Activated T-helper 2 cell treated with anti-CD3 and anti-CD28 coated beads, Interferon-gamma antibody, Interleukin-2, Interleukin-4, amounts not matched to agents 10 μg/mL and 5 μg/mL and 100 μg/mL, durations not matched to agents 14 hours and 24 hours and 36 hours (primary cell): ENCODE measurements at regions of chr17 and their contacts with region 1.

Region 1: GRCh38 chr17:79839363-79840268 is at the start of gene CBX4:
- DNase-seq: peak; percentile 82
- H3K4me3 Mint-ChIP-seq: peak within 1 kb of the TSS; percentile 88
- H3K27ac Mint-ChIP-seq: peak within 1 kb of the TSS; percentile 81
- H3K4me1 Mint-ChIP-seq: peaks cover 14% of the 10 kb centered on the region
- H3K27me3 Mint-ChIP-seq: peaks cover 20% of the 10 kb centered on the region
- total RNA-seq, gene CBX4: 18.5 and 25.0 TPM in 2 replicates

Region 2: GRCh38 chr17:79581324-79581932 is 258.2 kb before region 1 on chr17:
- intact Hi-C with region 1: no loop called
- DNase-seq: no peak
- H3K4me3 Mint-ChIP-seq: no peak overlapping the region
- H3K27ac Mint-ChIP-seq: no peak overlapping the region
- H3K4me1 Mint-ChIP-seq: no peaks in the 10 kb centered on the region
- H3K27me3 Mint-ChIP-seq: no peaks in the 10 kb centered on the region

Region 3: GRCh38 chr17:79749156-79749815 is 90.3 kb before region 1 on chr17:
- intact Hi-C with region 1: loop called (anchors 5 kb)
- DNase-seq: no peak
- H3K4me3 Mint-ChIP-seq: no peak overlapping the region
- H3K27ac Mint-ChIP-seq: no peak overlapping the region
- H3K4me1 Mint-ChIP-seq: peaks cover 16% of the 10 kb centered on the region
- H3K27me3 Mint-ChIP-seq: peaks cover 38% of the 10 kb centered on the region

Region 4: GRCh38 chr17:79796763-79797491 is 42.7 kb before region 1 on chr17 and contains the start of gene CBX8:
- intact Hi-C with region 1: loop called (anchors 2 kb)
- DNase-seq: peak; percentile 100
- H3K4me3 Mint-ChIP-seq: peak within 1 kb of the TSS; percentile 85
- H3K27ac Mint-ChIP-seq: peak within 1 kb of the TSS; percentile 78
- H3K4me1 Mint-ChIP-seq: peaks cover 23% of the 10 kb centered on the region
- H3K27me3 Mint-ChIP-seq: peaks cover 36% of the 10 kb centered on the region
- total RNA-seq, gene CBX8: 8.6 and 9.9 TPM in 2 replicates

Region 5: GRCh38 chr17:79810130-79811010 is 29.2 kb before region 1 on chr17:
- intact Hi-C with region 1: loop called (anchors 1 kb)
- DNase-seq: peak; percentile 81
- H3K4me3 Mint-ChIP-seq: peak overlapping the region; percentile 10
- H3K27ac Mint-ChIP-seq: no peak overlapping the region
- H3K4me1 Mint-ChIP-seq: peaks cover 33% of the 10 kb centered on the region
- H3K27me3 Mint-ChIP-seq: peaks cover 59% of the 10 kb centered on the region

Region 6: DNA sequence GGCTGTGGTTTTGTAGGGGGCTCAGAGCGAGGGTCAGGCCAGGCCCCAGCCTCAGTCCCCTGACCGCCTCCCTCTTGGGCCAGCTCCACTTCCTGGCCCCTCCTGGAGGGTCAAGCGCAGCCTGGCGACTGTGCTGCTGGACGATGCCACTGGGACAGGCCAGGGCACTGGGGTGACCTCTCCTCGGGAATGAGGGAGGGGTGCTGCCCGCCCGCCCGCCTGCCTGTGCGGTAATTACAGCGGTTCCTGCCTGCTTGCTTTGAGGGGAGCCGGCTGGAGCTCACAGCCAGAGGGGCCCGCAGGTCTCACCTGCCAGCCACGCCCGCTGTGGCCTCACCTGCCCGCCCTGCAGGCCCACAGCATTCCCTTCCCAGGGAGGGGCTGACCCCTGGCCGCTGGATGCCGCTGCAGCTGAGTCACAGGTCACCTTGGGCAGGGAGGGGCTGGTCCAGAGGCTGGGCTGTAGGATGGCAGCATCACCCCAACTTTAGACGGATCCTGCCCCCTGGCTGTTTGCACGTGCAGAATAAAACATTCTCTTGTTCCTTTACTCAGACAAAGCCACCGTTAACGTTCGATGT is 76.3 kb after region 1 on chr17:
- intact Hi-C with region 1: loop called (anchors 10 kb)
- DNase-seq: no peak
- H3K4me3 Mint-ChIP-seq: no peak overlapping the region
- H3K27ac Mint-ChIP-seq: no peak overlapping the region
- H3K4me1 Mint-ChIP-seq: no peaks in the 10 kb centered on the region
- H3K27me3 Mint-ChIP-seq: no peaks in the 10 kb centered on the region

Region 7: DNA sequence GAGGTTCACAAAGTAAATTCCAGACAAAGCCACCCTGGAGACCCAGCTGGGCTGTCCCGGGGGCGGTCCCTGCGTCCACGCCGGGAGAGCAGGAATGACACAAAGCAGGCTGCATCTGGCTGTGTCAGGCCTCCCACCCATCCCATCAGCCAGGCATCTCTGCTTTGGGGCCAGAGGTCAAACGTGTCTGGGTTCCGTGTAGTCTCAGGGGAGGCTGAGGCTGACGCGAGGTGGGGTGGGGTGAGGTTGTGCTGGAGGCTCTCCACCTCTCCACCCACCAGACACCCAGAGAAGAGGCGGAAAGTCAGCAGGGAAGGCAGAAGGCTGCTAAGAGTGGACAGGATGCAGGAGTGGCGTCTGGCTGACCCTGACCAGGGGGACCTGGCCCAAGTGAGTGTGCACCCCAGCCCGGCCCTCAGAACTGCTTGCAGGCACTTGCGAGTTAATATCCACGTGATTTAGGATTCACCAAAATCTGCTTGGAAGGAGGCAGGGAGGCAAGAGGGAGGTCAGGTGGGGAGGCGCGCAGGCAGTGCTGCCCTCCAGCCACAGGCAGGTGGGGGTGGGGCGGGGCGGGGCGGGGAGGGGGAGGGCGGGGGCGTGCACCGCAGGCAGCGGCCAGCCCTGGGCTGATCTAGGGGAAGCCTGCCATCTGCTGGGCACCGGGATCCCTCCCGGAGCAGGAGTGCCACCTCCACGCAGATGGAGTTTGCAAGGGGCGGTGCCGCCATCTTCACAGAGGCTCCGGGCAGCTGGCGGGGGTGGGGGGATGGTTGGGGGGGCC is 151.7 kb after region 1 on chr17:
- intact Hi-C with region 1: loop called (anchors 5 kb)
- DNase-seq: peak; percentile 75
- H3K4me3 Mint-ChIP-seq: peak overlapping the region; percentile 35
- H3K27ac Mint-ChIP-seq: no peak overlapping the region
- H3K4me1 Mint-ChIP-seq: peaks cover 24% of the 10 kb centered on the region
- H3K27me3 Mint-ChIP-seq: peaks cover 5% of the 10 kb centered on the region

Region 8: DNA sequence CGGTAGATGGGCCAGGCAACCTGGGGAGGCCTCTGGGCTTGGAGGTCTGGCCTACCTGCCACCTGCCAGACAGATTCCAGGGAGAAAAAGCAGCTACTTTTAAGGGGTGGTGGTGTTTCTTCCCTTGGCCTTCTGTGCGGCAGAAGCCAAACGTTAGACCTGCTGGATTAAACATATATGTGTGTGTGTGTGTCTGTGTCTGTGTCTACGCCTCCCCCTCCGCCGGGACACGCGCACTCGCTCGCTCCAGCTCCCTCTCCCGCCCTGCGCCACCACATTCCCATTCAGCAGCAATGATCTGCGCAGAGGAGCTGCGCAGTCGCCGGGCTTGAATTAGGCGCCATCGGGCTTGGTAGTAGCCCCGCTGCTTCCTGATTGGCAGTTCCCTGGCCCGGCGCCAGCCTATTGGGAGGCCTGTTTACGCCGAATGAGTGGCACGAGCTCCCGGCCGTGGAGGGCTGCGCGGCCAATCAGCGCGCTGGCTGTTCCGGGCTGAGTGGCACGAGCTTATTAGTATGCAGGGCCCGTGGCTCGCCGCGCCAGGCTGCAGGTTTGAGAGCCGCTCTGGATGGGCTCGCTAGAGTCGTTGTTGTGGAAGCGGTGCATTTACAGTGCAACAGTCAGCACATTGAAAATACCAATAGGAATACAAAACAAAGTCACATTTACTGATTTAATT is 1555.4 kb after region 1 on chr17 and contains the start of gene BAHCC1:
- intact Hi-C with region 1: loop called (anchors 5 kb)
- DNase-seq: peak; percentile 73
- H3K4me3 Mint-ChIP-seq: peak within 1 kb of the TSS; percentile 38
- H3K27ac Mint-ChIP-seq: peak within 1 kb of the TSS; percentile 33
- H3K4me1 Mint-ChIP-seq: peaks cover 11% of the 10 kb centered on the region
- H3K27me3 Mint-ChIP-seq: peaks cover 46% of the 10 kb centered on the region
- total RNA-seq, gene BAHCC1: 0.90 and 0.91 TPM in 2 replicates